A549 (cell line): ENCODE measurements at regions of chr20 and their contacts with region 1.

Region 1: GRCh38 chr20:56554869-56555268 is 21.8 kb downstream of the FAM209B start:
- DNase-seq: peak; percentile 77 to 92
- ATAC-seq: peak; percentile 88 to 91
- H3K4me3 ChIP-seq: no peak overlapping the region
- H3K27ac ChIP-seq: no peak overlapping the region; a peak in 1 of 6 replicates
- H3K4me1 ChIP-seq: peaks cover 19% of the 10 kb centered on the region
- CTCF ChIP-seq: no peak
- EP300 ChIP-seq: no peak
- POLR2A ChIP-seq: no peak
- RAD21 ChIP-seq: 0 out of 5 replicates have a peak, but pooled peaks of 1 of the 2 experiments have one; percentile 19

Region 2: DNA sequence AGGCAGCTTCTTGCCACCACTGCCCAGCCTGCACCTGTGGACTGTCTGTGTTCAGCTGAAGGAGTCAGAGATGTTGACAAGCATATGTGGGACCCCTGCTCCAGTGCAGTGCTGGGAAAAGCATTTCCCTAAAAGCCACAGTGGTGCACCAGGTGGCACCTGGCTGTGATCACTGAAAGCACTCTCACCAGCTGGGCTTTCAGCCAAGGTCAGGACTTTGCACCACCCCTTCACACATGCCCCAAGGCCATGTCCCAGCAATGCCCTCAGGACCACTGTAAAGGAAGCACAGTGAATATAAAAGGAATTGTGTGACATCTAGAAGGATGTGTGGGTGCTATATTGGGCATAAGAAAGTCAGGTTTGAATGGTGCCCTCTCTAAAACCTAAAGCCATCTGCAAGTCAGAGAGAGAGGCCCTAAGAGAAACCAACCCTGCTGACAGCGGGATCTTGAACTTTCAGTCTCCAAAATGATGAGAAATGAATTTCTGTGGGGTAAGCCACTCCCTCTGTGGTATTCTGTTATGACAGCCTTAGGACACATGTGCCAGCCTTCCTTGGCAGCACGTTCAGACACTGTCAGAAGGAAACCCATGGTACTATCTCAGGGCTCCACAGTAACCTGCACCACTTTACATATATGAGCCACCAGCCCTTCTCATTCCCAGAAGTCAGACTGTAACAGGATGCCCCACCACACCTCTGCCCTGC is 580.2 kb before region 1 on chr20:
- CTCF ChIA-PET with region 1: no interaction called
- POLR2A ChIA-PET with region 1: no interaction called
- DNase-seq: no peak
- ATAC-seq: no peak
- H3K4me3 ChIP-seq: no peak overlapping the region
- H3K27ac ChIP-seq: no peak overlapping the region
- H3K4me1 ChIP-seq: no peaks in the 10 kb centered on the region
- CTCF ChIP-seq: no peak
- EP300 ChIP-seq: no peak
- POLR2A ChIP-seq: no peak
- RAD21 ChIP-seq: no peak

Region 3: DNA sequence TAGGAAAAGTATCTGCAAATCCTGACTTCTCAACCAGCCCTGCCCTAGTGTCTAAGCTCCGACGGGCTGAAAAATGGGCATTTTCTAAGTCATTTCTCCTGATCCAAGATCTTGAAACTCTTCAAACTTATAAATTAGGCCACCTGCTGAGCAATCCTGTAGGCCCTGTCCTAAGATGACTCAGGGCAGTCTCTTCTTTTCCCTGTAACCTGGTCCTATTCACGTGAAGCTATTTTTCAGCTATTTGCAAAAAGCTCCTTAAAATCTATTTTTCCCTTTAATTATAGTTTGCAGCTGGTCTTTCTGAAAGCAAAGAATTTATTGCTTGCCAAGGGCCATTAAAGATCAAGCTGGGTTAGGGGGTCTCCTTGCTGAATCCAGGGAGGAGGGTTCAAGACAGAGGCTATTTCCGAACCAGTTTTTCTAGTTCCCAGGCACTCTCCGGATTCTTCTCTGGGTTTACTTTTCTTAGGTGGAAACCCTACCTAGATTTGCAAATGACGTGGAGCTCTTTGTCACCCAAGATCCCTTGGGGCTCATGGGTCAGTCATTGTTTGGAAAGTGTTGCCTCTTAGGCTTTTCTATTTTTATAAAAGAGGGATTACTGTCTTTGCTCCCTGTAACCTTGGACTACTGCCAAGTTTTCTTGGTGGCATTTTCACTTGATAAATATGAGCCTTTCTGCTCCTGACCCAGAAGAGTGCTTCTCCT is 11.6 kb after region 1 on chr20:
- CTCF ChIA-PET with region 1: interaction called, 94 read pairs
- POLR2A ChIA-PET with region 1: no interaction called
- DNase-seq: no peak
- ATAC-seq: no peak
- H3K4me3 ChIP-seq: no peak overlapping the region
- H3K27ac ChIP-seq: no peak overlapping the region
- H3K4me1 ChIP-seq: no peaks in the 10 kb centered on the region
- CTCF ChIP-seq: no peak
- EP300 ChIP-seq: no peak
- POLR2A ChIP-seq: no peak
- RAD21 ChIP-seq: no peak

Region 4: DNA sequence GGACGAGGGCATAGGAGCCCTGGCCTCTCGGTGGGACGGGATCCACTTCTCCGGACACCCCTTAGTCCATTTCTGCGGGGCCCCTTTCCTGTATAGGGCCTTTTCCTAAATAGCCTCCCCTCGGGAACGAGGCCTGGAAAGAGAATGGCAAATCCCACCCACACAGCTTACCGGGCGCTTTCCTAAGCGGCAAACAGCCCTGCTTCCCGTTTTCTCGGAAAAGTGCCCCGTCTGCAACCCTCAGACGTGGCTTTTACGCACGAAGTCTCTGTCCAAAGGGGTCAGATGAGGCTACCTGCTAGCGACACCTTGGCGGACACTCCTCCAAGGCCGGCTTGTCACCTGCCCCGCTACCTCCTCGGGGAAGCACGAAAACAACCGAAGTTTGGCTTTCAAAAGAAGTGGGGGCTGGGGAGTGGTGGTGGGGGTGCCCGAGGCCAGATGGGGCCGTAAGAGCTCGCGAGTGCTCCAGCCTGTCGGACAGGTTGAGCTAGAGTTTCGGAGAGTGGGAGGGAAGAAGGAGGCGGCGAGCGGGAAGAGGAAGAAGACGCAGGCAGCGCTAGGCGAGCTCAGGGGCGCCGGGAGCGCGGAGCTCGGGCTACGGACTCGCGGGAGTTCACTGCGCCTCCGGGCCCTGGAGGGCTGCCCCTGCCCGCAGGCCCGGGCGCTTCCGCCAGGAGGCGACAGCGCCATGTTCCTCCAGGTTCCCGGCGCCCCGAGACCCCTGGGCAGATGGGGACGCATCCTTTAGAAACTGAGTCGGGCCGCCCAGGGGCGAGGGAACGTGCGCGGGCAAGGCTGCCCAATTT is 75.0 kb after region 1 on chr20:
- CTCF ChIA-PET with region 1: interaction called, 27 read pairs
- POLR2A ChIA-PET with region 1: no interaction called
- DNase-seq: peak; percentile 83 to 88
- ATAC-seq: peak; percentile 76 to 87
- H3K4me3 ChIP-seq: peak overlapping the region; percentile 86
- H3K27ac ChIP-seq: peak overlapping the region; percentile 90 to 94
- H3K4me1 ChIP-seq: peaks cover 33% of the 10 kb centered on the region
- CTCF ChIP-seq: peak; percentile 88
- EP300 ChIP-seq: no peak
- POLR2A ChIP-seq: no peak
- RAD21 ChIP-seq: peak; percentile 69 to 94

Region 5: DNA sequence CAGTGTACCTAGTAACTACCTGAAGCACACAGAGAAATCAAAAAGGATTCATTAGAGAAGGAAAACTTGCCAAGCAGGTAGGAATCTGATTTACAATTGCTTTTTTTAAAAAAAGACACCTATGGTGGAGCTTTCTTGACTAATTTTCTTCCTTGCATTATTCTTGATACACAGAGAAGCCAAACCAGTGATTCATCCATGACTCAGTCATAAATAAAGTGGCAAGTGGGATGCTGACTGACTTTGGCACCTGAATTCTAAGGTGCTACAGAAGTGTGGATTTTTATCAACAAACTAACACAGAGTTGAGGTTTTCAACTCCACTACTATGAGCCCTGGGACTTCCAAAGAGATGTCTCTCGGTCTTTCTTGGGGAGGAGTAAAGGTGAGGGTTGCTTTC is 430.4 kb after region 1 on chr20:
- CTCF ChIA-PET with region 1: interaction called, 19 read pairs
- POLR2A ChIA-PET with region 1: no interaction called
- DNase-seq: no peak
- ATAC-seq: no peak
- H3K4me3 ChIP-seq: no peak overlapping the region
- H3K27ac ChIP-seq: no peak overlapping the region
- H3K4me1 ChIP-seq: no peaks in the 10 kb centered on the region
- CTCF ChIP-seq: no peak
- EP300 ChIP-seq: no peak
- POLR2A ChIP-seq: no peak
- RAD21 ChIP-seq: no peak

Region 6: GRCh38 chr20:57043091-57043490 is 488.2 kb after region 1 on chr20:
- CTCF ChIA-PET with region 1: interaction called, 27 read pairs
- POLR2A ChIA-PET with region 1: no interaction called
- DNase-seq: no peak
- ATAC-seq: no peak
- H3K4me3 ChIP-seq: no peak overlapping the region
- H3K27ac ChIP-seq: no peak overlapping the region
- H3K4me1 ChIP-seq: peaks cover 22% of the 10 kb centered on the region
- CTCF ChIP-seq: no peak
- EP300 ChIP-seq: no peak
- POLR2A ChIP-seq: no peak
- RAD21 ChIP-seq: no peak

Region 7: DNA sequence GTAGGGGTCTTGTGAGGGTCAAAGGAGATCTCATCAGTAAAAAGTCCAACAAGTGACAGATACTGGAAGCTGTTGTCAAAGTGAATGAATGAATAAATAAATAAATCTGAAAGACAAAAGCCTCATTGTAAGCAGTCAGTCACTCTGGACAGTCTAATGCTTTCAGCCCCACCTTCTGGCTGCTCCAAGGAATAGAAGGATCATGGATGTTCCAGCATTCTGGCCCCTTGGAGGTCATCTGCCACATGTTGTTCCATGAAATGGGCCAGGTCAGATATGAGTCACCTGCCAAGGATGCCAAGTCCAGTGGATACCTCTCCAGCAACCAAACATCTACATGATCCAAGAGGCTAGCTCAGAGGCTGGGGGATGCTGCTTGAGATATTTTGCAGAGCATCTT is 525.9 kb after region 1 on chr20:
- CTCF ChIA-PET with region 1: interaction called, 10 read pairs
- POLR2A ChIA-PET with region 1: no interaction called
- DNase-seq: peak in 1 of 2 experiments; percentile 33
- ATAC-seq: peak in 1 of 2 experiments; percentile 58; a peak in 3 of 6 replicates
- H3K4me3 ChIP-seq: no peak overlapping the region
- H3K27ac ChIP-seq: no peak overlapping the region
- H3K4me1 ChIP-seq: no peaks in the 10 kb centered on the region
- CTCF ChIP-seq: no peak
- EP300 ChIP-seq: no peak
- POLR2A ChIP-seq: no peak
- RAD21 ChIP-seq: peak; percentile 22 to 31; a peak in 2 of 5 replicates